PC-9 (cell line): ENCODE measurements at regions of chr2 and their contacts with region 1.

Region 1: DNA sequence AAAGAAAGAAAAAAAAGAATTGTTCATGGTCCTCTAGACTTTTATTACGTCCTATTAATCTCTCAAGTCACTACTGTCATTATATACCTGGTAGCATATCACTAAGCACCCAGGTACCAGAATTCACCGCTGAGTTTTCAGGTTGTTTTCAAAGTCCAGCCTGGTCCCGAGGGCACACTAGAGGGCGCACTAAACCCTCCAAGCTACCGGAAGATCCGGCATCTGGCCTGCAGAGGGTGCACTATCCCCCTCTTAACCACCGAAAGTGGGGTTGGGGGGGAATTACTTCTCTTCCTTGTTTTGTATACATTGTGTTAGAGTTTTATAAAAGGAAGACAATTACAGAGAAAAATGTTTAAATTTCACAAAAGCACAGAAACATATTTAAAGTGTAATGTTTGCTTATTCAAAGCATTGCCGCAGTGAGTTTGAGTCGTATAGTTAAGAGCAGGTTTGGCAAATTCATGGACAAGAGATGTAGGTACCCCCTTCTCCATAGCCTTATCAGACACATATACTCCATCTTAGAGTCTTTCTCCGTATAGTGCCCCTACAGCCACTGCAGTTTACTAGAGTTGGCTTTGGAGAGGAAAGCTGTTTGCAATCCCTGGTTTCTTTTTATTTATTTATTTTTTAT is 19.2 kb downstream of the MOGAT1 start:
- DNase-seq: peak; percentile 80 to 87
- H3K4me3 ChIP-seq: no peak overlapping the region
- H3K27ac ChIP-seq: no peak overlapping the region
- H3K4me1 ChIP-seq: no peaks in the 10 kb centered on the region
- H3K27me3 ChIP-seq: no peaks in the 10 kb centered on the region
- CTCF ChIP-seq: peak; percentile 100

Region 2: DNA sequence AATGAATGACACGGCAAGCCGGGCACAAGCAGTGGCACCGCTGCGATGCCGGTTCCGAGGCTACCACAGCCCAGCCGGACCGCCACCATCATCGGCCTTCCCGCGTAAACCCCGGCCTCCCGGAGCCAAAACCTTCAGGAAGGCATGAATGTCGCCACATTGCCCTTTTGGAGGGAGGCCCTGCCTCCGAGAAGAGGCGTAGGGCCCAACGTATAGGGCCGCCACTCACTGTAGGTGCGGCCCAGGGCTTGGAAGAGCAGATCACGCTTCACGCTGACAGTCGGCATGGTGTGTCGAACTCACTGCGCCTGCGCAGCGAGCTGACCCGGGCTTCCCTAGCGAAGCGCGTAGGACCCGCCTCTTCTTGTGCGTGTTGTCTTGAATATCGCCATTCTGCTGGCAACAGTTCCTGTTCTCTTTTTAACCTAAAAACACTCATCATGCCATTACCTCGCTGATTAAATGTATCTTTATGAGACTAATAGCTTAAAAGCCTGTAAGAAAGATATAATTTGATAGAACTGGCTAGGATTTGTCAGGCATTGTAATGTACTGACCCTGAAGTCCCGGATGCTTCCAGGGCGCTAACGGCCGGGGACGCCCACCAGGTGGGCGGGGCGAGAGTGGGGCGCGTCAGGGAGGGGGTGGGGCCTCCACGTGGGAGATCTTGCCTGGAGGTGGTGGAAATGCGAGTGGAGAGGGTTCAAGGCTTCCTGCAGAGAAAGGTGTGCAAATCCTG is 34.7 kb before region 1 on chr2 and contains the start of gene FARSB:
- CTCF ChIA-PET with region 1: no interaction called
- POLR2A ChIA-PET with region 1: interaction called, 12 read pairs
- intact Hi-C with region 1: no loop called
- DNase-seq: peak; percentile 97 to 98
- H3K4me3 ChIP-seq: peak within 1 kb of the TSS; percentile 78
- H3K27ac ChIP-seq: peak within 1 kb of the TSS; percentile 45
- H3K4me1 ChIP-seq: peaks cover 27% of the 10 kb centered on the region
- H3K27me3 ChIP-seq: no peaks in the 10 kb centered on the region
- CTCF ChIP-seq: no peak
- total RNA-seq, gene FARSB: 37.5 and 50.2 TPM in 2 replicates

Region 3: GRCh38 chr2:222903234-222904220 is 212.8 kb after region 1 on chr2:
- CTCF ChIA-PET with region 1: interaction called, 4 read pairs
- POLR2A ChIA-PET with region 1: no interaction called
- intact Hi-C with region 1: loop called (anchors 1 kb)
- DNase-seq: peak; percentile 48 to 68
- H3K4me3 ChIP-seq: no peak overlapping the region
- H3K27ac ChIP-seq: 0 out of 2 replicates have a peak overlapping the region, but pooled peaks have one; percentile 7
- H3K4me1 ChIP-seq: peaks cover 29% of the 10 kb centered on the region
- H3K27me3 ChIP-seq: no peaks in the 10 kb centered on the region
- CTCF ChIP-seq: peak; percentile 99

Region 4: DNA sequence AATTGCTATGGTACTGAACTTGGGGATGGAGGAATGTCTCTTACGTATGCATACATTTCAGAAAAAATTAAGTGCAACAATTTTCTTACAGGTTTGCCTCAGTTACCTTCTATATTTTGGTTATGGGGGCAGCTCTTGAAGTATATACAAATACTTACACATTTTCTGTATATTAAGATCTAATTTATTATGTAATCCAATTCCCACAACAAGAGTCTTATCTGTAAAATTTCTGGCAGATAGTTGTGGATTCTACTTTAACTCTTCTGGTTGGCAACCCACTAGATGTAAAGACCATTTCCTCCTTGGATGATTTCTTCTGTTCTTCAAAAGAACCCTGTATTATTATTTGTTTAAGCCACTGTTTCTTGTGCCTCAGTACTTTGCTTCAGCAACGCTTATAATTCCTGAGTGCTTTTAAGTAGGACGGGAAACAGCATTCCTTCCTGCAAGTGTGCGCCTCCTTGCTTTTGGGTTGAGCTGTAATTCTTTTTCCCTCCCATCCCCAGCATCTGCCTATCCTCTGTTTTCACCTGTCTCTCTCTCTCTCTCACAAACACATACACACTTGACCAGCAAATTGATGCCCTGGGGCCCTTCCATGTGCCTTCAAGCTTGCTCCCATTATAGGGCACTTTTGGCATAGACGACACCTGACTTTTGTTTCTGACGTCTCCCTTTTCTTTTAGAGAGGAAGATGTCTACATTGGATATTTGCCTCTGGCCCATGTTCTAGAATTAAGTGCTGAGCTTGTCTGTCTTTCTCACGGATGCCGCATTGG is 231.5 kb after region 1 on chr2:
- CTCF ChIA-PET with region 1: no interaction called
- POLR2A ChIA-PET with region 1: no interaction called
- intact Hi-C with region 1: no loop called
- DNase-seq: no peak
- H3K4me3 ChIP-seq: no peak overlapping the region
- H3K27ac ChIP-seq: no peak overlapping the region
- H3K4me1 ChIP-seq: peaks cover 23% of the 10 kb centered on the region
- H3K27me3 ChIP-seq: no peaks in the 10 kb centered on the region
- CTCF ChIP-seq: no peak

Region 5: GRCh38 chr2:222959336-222959735 is 268.7 kb after region 1 on chr2:
- CTCF ChIA-PET with region 1: interaction called, 4 read pairs
- POLR2A ChIA-PET with region 1: no interaction called
- intact Hi-C with region 1: loop called (anchors 5 kb)
- DNase-seq: peak; percentile 96 to 98
- H3K4me3 ChIP-seq: no peak overlapping the region
- H3K27ac ChIP-seq: peak overlapping the region; percentile 55
- H3K4me1 ChIP-seq: peaks cover 18% of the 10 kb centered on the region
- H3K27me3 ChIP-seq: no peaks in the 10 kb centered on the region
- CTCF ChIP-seq: peak; percentile 79

Region 6: GRCh38 chr2:223222403-223222802 is 531.7 kb after region 1 on chr2:
- CTCF ChIA-PET with region 1: no interaction called
- POLR2A ChIA-PET with region 1: no interaction called
- intact Hi-C with region 1: loop called (anchors 10 kb)
- DNase-seq: peak; percentile 16 to 79
- H3K4me3 ChIP-seq: no peak overlapping the region
- H3K27ac ChIP-seq: peak overlapping the region; percentile 40
- H3K4me1 ChIP-seq: peaks cover 35% of the 10 kb centered on the region
- H3K27me3 ChIP-seq: no peaks in the 10 kb centered on the region
- CTCF ChIP-seq: no peak